ENCODE measurements at regions of chr13 and their contacts with region 1.

Region 1: DNA sequence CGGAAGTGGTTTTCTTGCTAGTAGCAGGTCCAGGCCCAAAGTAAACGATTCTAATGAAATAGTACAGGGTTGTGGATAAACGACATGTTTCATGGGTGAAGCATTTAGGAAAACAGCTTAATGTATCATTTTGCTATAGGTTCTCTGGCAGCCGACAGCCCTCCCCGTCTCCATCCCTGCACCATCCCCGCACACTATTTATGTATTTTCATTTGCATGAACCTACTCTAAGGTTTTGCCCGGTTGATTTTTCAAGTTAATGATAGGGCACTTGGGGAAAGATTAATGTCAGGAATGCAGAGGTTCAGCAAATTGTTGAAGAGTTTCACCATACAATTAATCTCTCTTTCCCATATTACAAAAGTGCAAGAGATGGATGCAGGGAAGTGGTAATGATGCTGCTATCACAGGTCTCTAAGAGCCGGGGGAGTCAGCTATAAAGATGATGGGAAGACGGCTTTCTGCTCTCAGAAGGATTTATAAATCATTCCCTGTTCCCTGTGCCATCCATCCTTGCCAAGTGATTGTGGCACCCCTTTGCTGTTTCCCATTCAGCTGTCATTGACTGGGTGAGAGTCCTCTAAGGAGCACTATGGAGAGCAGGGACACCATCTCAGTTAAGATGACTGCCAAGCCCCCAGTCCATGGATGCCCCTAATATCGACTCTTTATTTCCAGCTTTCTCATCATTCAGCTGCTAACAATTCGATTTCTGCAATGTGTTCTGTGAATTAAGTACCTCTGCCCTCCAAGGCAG is 186.3 kb downstream of the IRS2 start:
- DNase-seq: no peak
- H3K4me3 ChIP-seq: no peak overlapping the region
- H3K4me3 Mint-ChIP-seq: no peak overlapping the region
- H3K27ac ChIP-seq: no peak overlapping the region
- H3K27ac Mint-ChIP-seq: no peak overlapping the region
- H3K4me1 ChIP-seq: no peaks in the 10 kb centered on the region
- H3K4me1 Mint-ChIP-seq: no peaks in the 10 kb centered on the region
- H3K27me3 ChIP-seq: no peaks in the 10 kb centered on the region
- H3K27me3 Mint-ChIP-seq: peaks cover 0 to 12% of the 10 kb centered on the region in 2 donors

Region 2: DNA sequence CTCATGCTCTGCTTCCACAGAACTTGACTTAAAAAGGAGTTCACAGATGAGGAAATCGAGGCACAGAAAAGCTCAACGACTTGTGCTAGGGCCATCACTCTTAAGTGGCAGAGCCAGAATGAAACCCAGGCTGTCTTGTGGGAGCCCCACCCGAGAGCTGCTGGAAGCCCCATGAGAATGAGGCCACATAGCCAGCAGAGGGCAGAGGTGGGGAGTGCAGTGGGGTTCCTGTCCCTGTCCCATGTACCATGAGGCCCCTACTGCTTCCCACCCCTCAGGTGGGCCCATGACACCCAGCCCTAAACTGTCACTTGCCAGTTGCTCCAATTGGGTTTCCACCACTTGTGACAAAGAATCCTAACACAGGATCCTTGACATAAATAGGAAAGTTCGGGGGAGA is 10.4 kb after region 1 on chr13:
- CTCF ChIA-PET with region 1: interaction called, 10 read pairs
- POLR2A ChIA-PET with region 1: no interaction called
- intact Hi-C with region 1: no loop called
- DNase-seq: peak in 4 of 5 donors; percentile 22 to 33 (median 28)
- H3K4me3 ChIP-seq: no peak overlapping the region
- H3K4me3 Mint-ChIP-seq: no peak overlapping the region
- H3K27ac ChIP-seq: no peak overlapping the region
- H3K27ac Mint-ChIP-seq: no peak overlapping the region
- H3K4me1 ChIP-seq: no peaks in the 10 kb centered on the region
- H3K4me1 Mint-ChIP-seq: no peaks in the 10 kb centered on the region
- H3K27me3 ChIP-seq: no peaks in the 10 kb centered on the region
- H3K27me3 Mint-ChIP-seq: peaks cover 1 to 2% of the 10 kb centered on the region in 2 donors

Measured in CD4-positive, alpha-beta memory T cell (primary cell).